ENCODE measurements at regions of chr12 and their contacts with region 1.

Region 1: DNA sequence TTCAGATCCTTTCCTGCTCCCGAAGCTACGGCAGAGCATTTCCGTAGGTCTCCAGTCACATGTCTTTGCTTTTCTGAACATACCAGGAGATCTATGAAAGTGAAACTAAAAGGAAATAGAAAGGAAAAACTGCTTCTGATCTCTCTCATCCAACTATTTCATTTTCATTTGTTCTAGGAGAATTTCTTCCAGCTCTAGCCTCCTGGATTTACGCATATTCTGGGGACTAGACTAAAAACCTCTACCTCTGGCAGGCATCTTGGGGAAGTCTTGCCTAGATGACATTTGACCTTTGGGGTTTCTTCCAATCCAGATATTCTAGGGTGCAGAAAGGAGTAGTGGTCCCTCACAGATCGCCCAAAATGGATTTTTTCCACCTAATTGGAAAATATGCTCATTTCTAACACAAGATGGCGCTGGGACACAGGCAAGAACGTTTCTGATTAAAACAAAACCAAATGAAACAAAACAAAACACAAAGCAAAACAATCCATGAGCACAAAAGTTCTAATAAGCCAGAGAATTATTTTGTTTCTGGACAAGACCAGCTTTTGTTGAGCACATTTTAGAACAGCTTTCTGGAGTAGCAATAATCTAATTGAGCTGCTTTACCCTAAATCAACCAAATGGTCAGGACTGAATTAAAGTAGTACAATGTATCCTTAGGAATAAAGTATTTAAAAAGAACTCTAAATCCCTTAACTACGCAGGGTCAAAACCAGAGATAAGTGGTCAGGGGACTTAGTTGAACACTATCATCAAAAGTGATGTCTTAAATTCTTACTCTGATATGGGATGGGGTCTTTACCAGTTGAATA is 12.3 kb upstream of the PARP11 start:
- DNase-seq: peak; percentile 30
- H3K4me3 ChIP-seq: peak overlapping the region; percentile 2 to 52; a peak in 3 of 4 replicates
- H3K27ac ChIP-seq: no peak overlapping the region
- H3K4me1 ChIP-seq: no peaks in the 10 kb centered on the region; a peak in 1 of 4 replicates
- H3K27me3 ChIP-seq: peaks cover 50% of the 10 kb centered on the region
- CTCF ChIP-seq: peak; percentile 90
- EP300 ChIP-seq: no peak
- RAD21 ChIP-seq: peak; percentile 80

Region 2: GRCh38 chr12:3802721-3803120 is 82.8 kb before region 1 on chr12:
- CTCF ChIA-PET with region 1: no interaction called
- POLR2A ChIA-PET with region 1: no interaction called
- DNase-seq: no peak
- H3K4me3 ChIP-seq: no peak overlapping the region
- H3K27ac ChIP-seq: no peak overlapping the region
- H3K4me1 ChIP-seq: peaks cover 0 to 8% of the 10 kb centered on the region in 2 experiments; a peak in 1 of 4 replicates
- H3K27me3 ChIP-seq: no peaks in the 10 kb centered on the region
- CTCF ChIP-seq: no peak
- EP300 ChIP-seq: no peak
- RAD21 ChIP-seq: no peak

Region 3: DNA sequence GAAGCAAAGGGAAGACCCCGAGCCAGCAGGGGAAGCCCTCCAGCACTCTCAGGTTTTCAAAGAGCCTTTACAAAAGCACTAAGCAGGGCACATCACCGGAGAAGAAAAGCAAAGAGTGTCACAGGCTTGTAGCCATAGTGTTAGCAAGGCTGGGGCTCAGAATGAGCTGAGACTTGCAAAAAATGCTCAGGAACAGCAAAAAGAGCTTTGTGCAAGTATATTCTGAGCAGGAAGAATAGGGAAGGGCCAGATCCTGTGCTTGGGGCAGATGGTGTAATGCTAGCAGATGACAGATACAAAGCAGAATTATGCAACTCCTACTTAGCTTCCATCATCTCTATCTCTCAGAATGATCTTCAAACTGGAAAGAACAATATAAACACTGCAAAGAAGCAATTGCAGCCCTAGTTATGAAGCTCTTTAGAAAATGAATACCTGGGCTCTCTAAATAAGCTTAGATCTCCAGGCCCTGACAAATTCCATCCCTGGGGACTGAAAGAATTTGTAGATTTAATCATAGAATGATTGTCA is 11.4 kb after region 1 on chr12:
- CTCF ChIA-PET with region 1: interaction called, 15 read pairs
- POLR2A ChIA-PET with region 1: no interaction called
- DNase-seq: no peak
- H3K4me3 ChIP-seq: no peak overlapping the region
- H3K27ac ChIP-seq: no peak overlapping the region
- H3K4me1 ChIP-seq: no peaks in the 10 kb centered on the region
- H3K27me3 ChIP-seq: peaks cover 54% of the 10 kb centered on the region
- CTCF ChIP-seq: no peak
- EP300 ChIP-seq: no peak
- RAD21 ChIP-seq: no peak

Region 4: GRCh38 chr12:3913278-3913677 is 27.8 kb after region 1 on chr12:
- CTCF ChIA-PET with region 1: interaction called, 13 read pairs
- POLR2A ChIA-PET with region 1: no interaction called
- DNase-seq: no peak
- H3K4me3 ChIP-seq: no peak overlapping the region
- H3K27ac ChIP-seq: no peak overlapping the region
- H3K4me1 ChIP-seq: no peaks in the 10 kb centered on the region
- H3K27me3 ChIP-seq: peaks cover 67% of the 10 kb centered on the region
- CTCF ChIP-seq: no peak
- EP300 ChIP-seq: no peak
- RAD21 ChIP-seq: no peak

Region 5: DNA sequence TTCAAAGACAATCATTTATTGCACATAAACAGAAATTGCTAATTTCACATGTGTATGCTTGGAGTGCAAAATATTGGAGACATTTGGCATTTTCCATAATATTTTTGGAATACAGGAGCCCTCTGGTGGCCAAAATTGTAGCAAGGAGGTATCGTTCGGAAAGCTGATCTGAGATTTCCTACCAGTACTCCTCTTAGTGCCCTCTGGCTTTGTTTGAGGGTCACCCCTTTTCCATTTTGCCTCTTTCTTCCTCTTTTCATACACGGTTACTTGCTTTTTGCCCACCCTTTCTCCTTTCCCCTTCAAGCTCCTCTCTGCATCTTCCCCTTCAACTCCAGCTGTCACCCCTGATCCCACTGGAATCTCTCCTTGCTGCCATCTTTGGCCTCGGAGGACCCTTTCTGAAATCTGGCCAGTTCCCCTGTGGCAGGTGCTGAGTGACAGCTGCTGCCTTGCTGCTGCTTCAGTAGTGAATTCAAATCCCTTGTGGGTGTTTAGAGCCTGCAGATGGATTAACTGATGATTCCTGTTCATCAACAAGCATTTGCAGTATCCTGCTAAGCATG is 152.3 kb after region 1 on chr12:
- CTCF ChIA-PET with region 1: interaction called, 88 read pairs
- POLR2A ChIA-PET with region 1: interaction called, 3 read pairs
- DNase-seq: peak; percentile 27
- H3K4me3 ChIP-seq: no peak overlapping the region
- H3K27ac ChIP-seq: no peak overlapping the region
- H3K4me1 ChIP-seq: no peaks in the 10 kb centered on the region
- H3K27me3 ChIP-seq: peaks cover 67% of the 10 kb centered on the region; the same call in 1 of the 2 replicates
- CTCF ChIP-seq: peak; percentile 77
- EP300 ChIP-seq: no peak
- RAD21 ChIP-seq: peak; percentile 61

Region 6: DNA sequence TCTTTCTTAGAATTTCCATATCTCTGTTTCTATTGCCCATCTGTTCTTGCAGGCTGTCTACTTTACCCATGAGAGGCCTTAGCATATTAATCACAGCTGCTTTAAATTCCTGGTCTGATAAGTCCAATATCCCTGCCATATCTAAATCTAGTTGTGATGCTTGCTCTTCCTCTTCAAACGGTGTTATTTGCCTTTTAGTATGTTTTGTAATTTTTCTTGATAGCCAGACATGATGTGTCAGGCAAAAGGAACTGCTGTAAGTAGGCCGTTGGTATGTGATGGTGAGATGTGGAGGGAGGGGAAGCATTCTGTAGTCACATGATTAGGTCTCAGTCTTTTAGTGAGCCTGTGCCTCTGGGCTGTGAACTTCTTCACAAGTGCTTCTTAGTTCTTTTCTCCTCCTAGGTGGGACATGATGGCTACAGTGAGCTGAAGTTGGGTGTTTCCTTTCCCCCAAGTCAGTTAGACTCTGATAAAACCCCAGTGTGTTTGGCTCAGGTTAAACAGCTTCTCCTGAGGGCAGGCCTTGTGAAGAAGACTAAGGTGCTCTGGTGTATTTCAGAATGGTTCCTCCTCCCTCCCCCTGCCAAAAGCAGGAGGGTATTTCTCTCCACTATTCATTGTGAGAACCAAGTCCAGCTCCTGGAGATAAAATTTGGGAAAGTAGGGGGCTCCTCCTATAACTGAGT is 183.6 kb after region 1 on chr12:
- CTCF ChIA-PET with region 1: no interaction called
- POLR2A ChIA-PET with region 1: no interaction called
- DNase-seq: no peak
- H3K4me3 ChIP-seq: no peak overlapping the region
- H3K27ac ChIP-seq: no peak overlapping the region
- H3K4me1 ChIP-seq: no peaks in the 10 kb centered on the region
- H3K27me3 ChIP-seq: no peaks in the 10 kb centered on the region
- CTCF ChIP-seq: no peak
- EP300 ChIP-seq: no peak
- RAD21 ChIP-seq: no peak

Region 7: DNA sequence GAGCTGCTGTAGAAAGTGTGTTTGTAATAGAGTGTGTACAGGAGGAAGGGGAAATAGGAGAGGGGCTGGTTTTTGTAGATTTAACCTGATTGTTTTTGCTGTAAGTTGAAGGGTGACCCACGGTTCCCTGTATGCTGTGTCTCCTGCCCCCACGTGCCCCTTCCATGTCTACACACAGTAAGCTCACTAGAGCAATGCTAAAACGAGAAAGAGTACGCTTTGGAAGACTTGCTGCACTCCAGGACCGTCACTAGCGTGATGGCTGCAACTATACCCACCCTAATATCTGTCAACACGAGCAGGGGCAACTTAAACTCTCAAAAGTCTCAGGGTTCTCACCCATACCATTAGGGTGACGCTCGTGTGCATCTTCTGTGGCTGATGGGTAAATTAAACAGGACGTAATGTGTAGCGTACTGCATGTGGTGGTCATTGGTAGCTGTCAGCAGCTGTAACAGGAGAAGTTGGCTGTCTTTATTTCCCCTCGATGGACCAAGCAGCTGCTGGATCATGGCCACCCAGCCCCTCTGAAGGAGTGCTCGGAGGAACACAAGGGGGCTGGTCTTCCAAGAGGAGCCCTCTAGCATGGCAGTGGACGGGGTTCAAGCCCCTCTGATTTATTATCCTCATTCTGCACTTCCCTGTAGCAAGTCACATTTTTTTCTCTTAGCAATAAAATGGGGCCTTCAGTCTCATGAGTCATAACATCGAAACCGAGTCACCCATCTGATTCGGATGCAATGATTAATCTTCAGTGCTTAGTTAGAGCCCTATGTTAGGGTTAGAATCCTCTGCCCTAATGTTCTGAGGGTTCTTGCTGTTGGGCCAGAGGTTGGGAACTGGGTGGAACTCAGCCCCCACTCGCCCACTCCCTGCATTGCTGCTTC is 402.1 kb after region 1 on chr12:
- CTCF ChIA-PET with region 1: interaction called, 13 read pairs
- POLR2A ChIA-PET with region 1: no interaction called
- DNase-seq: no peak
- H3K4me3 ChIP-seq: no peak overlapping the region
- H3K27ac ChIP-seq: no peak overlapping the region
- H3K4me1 ChIP-seq: no peaks in the 10 kb centered on the region
- H3K27me3 ChIP-seq: peaks cover 98% of the 10 kb centered on the region
- CTCF ChIP-seq: no peak
- EP300 ChIP-seq: no peak
- RAD21 ChIP-seq: no peak